AG04449 (cell line): ENCODE measurements at regions of chr1 and their contacts with region 1.

Region 1: DNA sequence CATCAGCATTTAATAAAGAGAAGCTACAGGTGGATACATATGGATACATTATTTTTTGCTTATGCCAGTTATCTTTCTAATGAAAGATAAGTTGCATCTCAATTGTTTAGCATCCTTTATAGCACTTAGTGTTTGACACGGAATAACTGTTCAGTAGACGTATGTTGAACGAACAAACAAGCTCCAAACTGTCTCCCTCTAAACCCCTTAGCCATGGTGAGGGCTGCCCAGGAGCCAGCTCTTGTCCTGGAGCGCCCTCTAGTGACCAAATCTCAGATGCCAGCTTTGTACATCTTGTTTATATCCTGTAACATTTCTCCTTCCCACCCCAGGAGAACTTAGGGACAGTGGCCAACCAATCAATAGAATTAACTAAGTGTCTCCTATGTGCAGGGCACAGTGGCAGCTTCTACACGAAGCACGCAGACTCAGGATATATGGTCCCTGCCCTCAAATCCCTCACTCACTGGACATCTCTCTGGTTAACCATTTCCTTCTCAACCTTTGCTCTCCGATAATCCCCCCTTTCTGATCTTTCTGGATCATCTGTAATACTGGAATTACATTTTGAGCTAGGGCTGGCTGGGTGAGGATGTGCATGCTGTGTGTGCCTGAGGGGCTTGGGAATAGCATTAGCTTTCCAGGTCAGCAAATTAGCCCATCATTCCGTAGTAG is 22.9 kb downstream of the KCNA10 start:
- DNase-seq: peak; percentile 28
- H3K4me3 ChIP-seq: no peak overlapping the region
- CTCF ChIP-seq: peak; percentile 78

Region 2: DNA sequence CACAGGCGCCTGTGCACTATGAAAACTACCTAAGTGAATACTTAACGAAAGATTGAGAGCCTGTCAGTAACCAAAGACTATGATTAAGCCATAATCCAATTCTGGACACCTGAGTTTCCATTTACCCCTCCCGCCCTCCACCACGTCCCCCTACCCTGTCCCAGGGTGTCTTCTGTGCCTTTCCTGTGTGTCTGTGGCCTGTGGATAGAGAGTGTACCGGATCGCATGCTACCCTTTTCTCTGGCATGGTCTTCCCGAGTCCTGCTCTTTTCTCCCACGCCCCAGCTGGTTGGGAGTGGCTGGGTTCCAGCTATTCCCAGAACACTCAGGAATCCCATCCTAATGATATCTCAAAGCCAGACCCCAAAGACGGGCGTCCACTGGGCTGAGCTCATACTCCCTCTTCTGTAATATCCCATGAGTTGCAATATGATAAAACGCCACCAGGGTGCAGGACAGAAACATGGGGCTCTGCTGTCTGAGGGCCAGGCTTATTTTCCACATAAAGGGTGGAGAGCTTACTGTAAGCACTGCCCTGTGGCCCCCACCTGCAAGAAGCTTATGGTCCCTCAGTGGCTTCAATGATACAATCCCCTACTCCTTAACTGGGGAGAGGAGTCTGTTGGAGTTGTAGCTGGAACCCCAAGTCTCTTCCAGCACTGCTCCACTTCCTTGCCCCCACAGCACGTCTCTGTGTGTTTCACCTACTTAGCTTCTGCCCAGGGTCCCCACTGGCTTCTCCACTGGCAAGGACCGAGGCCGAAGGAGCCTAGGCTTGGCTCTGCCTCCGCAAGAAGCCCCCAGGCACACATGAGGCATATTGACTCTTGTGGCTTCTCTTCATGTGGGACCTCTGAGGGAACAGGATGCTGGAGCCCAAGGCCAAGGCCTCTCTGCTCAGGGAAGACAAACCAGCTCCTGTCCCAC is 408.0 kb before region 1 on chr1:
- CTCF ChIA-PET with region 1: interaction called, 14 read pairs
- POLR2A ChIA-PET with region 1: no interaction called
- DNase-seq: no peak
- H3K4me3 ChIP-seq: no peak overlapping the region
- CTCF ChIP-seq: peak; percentile 63

Region 3: GRCh38 chr1:110235834-110236682 is 260.0 kb before region 1 on chr1:
- CTCF ChIA-PET with region 1: no interaction called
- POLR2A ChIA-PET with region 1: no interaction called
- DNase-seq: peak; percentile 28
- H3K4me3 ChIP-seq: no peak overlapping the region
- CTCF ChIP-seq: no peak

Region 4: DNA sequence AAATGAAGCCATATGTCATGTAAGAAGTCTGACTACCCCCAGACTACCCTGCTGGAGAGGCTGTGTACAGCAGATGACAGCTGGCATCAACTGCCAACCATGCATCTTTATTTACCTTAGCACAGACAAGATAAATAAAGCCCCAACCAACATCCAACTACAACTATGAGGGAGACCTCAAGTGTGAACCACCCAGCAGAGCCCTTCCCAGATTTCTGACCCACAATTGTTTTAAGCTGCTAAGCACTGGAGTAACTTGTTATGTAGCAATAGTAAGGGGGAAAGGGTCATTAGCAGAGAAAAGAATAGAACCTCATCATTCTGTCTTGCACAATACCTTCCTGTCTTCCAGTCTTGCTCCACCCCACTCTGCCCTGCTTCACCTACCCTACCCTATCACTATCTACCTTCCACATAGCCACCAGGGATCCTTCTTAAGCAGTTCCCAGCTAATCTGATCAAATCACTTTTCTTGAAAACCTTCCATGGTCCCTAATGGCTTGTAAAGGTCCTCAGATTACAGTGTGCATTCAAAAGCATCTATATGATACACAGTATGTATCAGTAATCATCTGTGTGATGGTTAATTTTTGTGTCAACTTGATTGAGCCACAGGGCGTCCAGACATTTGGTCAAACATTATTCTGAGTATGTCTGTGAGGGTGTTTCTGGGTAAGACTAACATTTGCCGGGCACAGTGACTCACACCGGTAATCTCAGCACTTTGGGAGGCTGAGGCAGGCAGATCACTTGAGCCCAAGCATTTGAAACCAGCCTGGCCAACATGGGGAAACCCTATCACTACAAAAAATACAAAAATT is 176.5 kb before region 1 on chr1:
- CTCF ChIA-PET with region 1: interaction called, 28 read pairs
- POLR2A ChIA-PET with region 1: no interaction called
- DNase-seq: no peak
- H3K4me3 ChIP-seq: no peak overlapping the region
- CTCF ChIP-seq: no peak

Region 5: DNA sequence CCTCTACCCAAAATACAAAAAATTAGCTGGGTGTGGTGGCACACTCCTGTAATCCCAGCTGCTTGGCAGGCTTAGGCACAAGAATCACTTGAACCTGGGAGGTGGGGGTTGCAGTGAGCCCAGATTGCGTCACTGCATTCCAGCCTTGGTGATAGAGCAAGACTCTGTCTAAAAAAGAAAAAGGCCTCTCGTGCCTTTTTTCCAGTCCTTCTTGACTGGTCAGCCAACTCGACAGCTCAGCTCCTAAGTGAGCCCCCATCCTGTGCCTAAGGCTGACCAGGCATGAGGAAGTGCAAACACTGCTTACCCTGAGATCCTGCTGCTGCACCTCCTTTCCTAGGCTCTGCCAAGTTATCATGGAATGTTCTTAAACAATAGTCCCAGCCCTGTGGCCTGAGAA is 55.2 kb before region 1 on chr1:
- CTCF ChIA-PET with region 1: interaction called, 10 read pairs
- POLR2A ChIA-PET with region 1: no interaction called
- DNase-seq: no peak
- H3K4me3 ChIP-seq: no peak overlapping the region
- CTCF ChIP-seq: no peak

Region 6: DNA sequence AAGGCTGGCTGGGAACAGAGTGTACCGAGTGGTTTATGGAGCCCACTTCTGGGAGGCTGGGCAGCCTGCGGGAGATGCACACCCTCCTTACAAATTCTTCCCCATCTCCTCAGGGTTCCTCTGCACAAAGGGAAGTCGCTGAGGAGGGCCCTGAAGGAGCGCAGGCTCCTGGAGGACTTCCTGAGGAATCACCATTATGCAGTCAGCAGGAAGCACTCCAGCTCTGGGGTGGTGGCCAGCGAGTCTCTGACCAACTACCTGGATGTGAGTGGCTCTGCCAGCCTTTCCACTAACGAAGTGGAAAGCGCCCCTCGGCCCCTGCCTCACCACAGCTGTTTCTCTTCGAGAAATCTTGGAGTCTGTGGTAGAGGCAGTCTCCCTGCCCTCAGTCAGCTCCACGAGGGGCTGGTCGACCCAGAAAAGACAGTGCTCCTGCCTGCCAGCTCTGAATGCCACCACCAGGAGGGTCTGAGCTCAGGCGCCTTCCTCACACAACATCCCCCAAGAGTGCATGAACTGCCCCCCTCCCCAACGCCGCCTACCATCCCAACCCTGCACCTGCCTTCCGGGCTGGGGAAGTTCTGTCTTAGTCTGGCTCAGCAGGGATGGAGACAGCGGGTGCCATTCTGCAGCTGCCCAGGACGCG is 13.3 kb before region 1 on chr1:
- CTCF ChIA-PET with region 1: interaction called, 105 read pairs
- POLR2A ChIA-PET with region 1: no interaction called
- DNase-seq: no peak
- H3K4me3 ChIP-seq: no peak overlapping the region
- CTCF ChIP-seq: no peak

Region 7: GRCh38 chr1:110548381-110548780 is 52.3 kb after region 1 on chr1:
- CTCF ChIA-PET with region 1: no interaction called
- POLR2A ChIA-PET with region 1: no interaction called
- DNase-seq: no peak
- H3K4me3 ChIP-seq: no peak overlapping the region
- CTCF ChIP-seq: peak; percentile 23

Region 8: DNA sequence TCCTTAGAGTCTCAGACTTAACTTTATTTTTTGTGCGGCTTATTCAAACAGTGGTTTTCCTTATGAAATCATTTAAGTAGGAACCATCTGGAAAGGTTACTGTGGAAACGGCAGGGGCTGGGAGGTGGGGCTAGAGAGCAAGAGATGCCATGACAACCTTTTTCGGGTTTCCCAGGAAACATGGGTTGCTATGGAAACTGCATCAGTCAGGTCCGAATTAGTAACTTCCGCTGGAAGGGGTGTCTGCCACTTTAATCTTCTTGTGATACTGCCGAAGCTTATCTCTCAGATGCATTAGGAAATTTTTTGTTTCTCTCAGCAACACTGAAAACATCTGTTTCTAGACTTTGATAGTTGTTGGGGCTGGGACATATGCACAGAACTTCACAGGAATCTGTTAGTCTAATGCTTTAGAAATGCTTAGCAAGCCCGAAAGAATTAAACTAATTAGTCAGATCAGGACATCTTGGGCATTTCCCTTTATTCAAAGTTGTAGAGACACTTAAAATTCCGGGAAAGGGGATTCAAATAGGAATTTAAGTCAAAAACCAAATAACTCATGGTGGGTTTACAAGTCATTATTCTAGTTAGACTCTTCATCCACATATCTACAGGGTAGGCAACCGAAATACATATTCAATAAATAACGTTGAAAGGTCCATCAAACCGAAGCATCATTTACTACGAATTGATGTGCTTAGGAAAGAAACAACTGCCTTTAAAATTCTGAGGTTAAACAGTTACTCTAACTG is 176.1 kb after region 1 on chr1:
- CTCF ChIA-PET with region 1: no interaction called
- POLR2A ChIA-PET with region 1: no interaction called
- DNase-seq: no peak
- H3K4me3 ChIP-seq: no peak overlapping the region
- CTCF ChIP-seq: no peak